Mammary epithelial cell (primary cell): ENCODE measurements at regions of chr2 and their contacts with region 1.

Region 1: DNA sequence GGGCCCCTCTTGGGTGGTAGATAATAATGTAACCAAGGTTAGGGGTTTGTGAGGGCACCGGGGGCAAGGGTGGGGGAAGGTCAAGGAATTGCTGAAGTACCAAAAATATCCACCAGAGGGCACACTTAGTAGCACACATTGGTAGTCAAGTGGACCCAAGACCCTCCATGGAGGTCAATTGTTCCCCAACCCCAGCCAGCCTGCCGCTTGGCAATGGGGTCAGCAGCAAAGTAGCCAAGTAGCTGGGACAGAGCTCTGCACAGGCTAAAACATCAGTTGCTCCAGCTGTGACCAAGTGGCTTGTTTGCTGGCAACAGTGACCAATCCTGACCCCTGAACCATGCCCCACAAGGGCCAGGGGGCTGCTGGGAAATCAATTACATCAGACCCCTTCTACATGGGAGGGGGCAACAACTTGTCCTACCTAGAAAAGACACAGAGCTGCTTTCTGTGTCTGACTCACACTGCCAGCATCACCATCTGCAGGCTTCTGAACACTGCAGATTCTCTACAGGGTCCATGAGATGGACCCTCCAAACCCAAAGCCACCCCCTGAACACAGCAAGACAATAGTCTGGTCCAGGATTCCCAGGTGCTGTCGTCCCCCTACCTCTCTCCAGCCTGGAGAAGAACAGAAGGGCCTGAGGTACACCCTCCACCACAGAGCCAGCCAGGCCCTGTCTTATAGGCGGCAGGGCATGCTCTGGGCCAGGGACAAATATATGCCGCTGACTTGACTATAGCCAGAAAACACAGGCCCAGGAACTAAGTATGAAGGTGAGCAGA is 76.0 kb downstream of the EMX1 start:
- DNase-seq: no peak
- H3K4me3 ChIP-seq: no peak overlapping the region
- H3K27ac ChIP-seq: no peak overlapping the region
- H3K4me1 ChIP-seq: no peaks in the 10 kb centered on the region
- H3K27me3 ChIP-seq: no peaks in the 10 kb centered on the region
- CTCF ChIP-seq: peak; percentile 70 to 73

Region 2: GRCh38 chr2:73020657-73021370 is 27.5 kb after region 1 on chr2:
- CTCF ChIA-PET with region 1: no interaction called
- dilution Hi-C with region 1: loop called (anchors 5 kb)
- in situ Hi-C with region 1: no loop called
- intact Hi-C with region 1: no loop called
- DNase-seq: no peak
- H3K4me3 ChIP-seq: no peak overlapping the region
- H3K27ac ChIP-seq: no peak overlapping the region
- H3K4me1 ChIP-seq: peaks cover 6% of the 10 kb centered on the region
- H3K27me3 ChIP-seq: no peaks in the 10 kb centered on the region
- CTCF ChIP-seq: no peak

Region 3: DNA sequence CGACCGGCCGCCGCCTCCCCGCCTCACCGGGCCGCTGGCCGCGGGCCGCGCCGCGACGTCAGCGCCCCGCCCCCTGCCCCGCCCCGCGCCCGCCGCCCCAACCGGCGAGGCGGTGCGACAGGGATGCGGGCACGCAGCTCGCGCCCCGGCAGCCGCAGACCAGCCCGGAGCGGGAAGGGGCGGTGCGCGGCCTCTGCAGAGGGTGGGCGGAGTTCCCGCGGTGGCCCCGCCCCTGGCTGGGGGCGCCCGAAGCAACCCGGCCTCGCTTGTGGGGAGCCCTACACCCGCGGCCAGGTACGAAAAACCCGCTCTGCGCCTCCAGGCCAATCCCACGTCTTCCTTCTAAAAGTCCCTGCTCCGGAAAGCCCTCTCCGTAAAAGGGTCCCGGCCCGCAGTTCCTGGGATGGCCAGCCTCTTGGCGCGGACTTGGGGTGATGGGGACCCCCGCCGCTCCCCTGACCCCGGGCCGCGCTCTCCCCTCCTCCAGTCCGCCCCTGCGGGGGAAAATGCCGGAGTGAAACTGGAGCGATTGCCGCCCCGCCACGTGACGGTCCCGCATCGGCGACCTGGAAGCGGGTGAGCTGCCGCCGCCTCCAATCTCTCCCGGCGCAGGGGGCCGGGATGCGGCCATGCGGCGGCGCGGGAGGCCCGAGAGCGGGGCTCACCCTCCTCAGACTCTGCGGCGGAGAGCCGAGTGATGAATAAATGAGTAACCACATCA is 119.7 kb after region 1 on chr2 and contains the start of gene RAB11FIP5:
- CTCF ChIA-PET with region 1: no interaction called
- dilution Hi-C with region 1: no loop called
- in situ Hi-C with region 1: no loop called
- intact Hi-C with region 1: no loop called
- DNase-seq: peak; percentile 86
- H3K4me3 ChIP-seq: peak within 1 kb of the TSS; percentile 79 to 89 (median 86)
- H3K27ac ChIP-seq: peak within 1 kb of the TSS; percentile 92
- H3K4me1 ChIP-seq: peaks cover 16% of the 10 kb centered on the region
- H3K27me3 ChIP-seq: no peaks in the 10 kb centered on the region
- CTCF ChIP-seq: no peak
- total RNA-seq, gene RAB11FIP5: 36.0 to 39.7 TPM

Region 4: DNA sequence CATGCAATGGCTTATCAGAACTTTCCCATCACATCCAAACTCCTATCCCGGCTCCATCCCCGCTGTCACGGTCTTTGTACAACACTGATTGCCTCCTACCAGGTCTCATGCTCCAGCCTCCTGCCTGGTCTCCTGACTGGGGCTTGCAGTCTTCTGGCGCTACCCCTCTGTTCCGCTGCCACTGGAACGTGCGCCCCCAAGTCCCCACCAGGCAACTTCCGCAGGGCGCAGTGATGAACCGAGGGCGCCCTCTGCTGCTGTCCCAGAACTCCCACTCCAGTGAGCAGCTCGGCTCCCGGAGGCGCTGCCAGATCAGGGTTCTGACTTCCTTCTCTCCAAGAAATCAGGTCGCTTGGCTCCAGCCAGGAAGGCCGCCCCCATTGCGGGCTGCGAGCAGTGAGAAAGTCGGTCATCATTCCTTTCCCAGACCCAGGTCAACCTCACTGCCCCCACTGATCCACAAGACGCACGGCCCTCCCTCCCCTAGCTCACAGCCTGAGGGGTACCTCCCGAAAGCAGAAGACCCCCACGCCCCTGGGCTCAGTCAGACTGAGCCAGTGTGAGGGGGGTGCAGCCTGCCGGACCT is 163.3 kb after region 1 on chr2:
- CTCF ChIA-PET with region 1: no interaction called
- dilution Hi-C with region 1: no loop called
- in situ Hi-C with region 1: loop called (anchors 5 to 25 kb)
- intact Hi-C with region 1: loop called (anchors 1 kb)
- DNase-seq: peak; percentile 24
- H3K4me3 ChIP-seq: peak overlapping the region in 1 of 3 experiments; percentile 36
- H3K27ac ChIP-seq: no peak overlapping the region
- H3K4me1 ChIP-seq: no peaks in the 10 kb centered on the region
- H3K27me3 ChIP-seq: no peaks in the 10 kb centered on the region
- CTCF ChIP-seq: peak; percentile 76 to 86

Region 5: DNA sequence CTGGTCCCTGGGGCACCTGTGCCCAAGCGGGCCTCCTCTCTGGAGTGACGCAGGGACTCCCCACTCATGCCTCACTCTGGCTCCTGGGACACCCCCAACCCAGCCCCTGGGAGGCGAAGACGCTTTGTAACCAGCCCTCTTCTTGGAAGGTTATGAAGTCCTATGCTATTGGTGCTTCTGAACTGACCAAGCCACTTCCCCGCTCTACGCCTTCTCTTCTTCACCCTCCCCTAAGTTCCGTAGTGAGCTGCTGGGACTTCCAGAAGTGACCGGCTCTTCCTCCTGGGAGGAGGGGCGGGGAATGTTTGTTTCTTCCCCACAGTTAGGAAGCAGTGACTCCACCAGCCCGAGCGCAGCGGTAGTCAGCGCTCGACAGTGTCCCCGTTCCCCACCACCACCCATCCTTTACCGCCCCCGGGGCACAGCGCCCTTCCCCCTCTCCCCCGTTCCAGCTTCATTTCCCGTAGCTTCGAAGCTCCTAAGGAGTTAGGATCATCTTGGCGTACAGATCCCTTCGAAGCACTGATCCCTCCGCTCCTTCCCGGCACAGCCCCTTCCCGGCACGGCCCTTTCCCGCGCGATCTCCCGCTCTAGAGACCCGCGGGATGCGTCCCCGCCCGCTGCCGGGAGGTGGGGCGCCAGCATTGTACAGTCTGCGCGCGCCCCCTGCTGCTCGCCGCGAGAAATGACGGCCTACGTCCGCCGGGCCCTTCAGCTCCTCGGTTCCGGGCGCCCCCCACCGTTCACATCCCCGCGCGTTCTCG is 183.7 kb after region 1 on chr2:
- CTCF ChIA-PET with region 1: interaction called, 3 read pairs
- dilution Hi-C with region 1: no loop called
- in situ Hi-C with region 1: loop called in 1 of 2 experiments (anchors 25 kb)
- intact Hi-C with region 1: loop called (anchors 1 kb)
- DNase-seq: peak; percentile 64
- H3K4me3 ChIP-seq: peak overlapping the region; percentile 55 to 59 (median 55)
- H3K27ac ChIP-seq: no peak overlapping the region
- H3K4me1 ChIP-seq: peaks cover 27% of the 10 kb centered on the region
- H3K27me3 ChIP-seq: peaks cover 13% of the 10 kb centered on the region
- CTCF ChIP-seq: peak; percentile 64 to 93

Region 6: DNA sequence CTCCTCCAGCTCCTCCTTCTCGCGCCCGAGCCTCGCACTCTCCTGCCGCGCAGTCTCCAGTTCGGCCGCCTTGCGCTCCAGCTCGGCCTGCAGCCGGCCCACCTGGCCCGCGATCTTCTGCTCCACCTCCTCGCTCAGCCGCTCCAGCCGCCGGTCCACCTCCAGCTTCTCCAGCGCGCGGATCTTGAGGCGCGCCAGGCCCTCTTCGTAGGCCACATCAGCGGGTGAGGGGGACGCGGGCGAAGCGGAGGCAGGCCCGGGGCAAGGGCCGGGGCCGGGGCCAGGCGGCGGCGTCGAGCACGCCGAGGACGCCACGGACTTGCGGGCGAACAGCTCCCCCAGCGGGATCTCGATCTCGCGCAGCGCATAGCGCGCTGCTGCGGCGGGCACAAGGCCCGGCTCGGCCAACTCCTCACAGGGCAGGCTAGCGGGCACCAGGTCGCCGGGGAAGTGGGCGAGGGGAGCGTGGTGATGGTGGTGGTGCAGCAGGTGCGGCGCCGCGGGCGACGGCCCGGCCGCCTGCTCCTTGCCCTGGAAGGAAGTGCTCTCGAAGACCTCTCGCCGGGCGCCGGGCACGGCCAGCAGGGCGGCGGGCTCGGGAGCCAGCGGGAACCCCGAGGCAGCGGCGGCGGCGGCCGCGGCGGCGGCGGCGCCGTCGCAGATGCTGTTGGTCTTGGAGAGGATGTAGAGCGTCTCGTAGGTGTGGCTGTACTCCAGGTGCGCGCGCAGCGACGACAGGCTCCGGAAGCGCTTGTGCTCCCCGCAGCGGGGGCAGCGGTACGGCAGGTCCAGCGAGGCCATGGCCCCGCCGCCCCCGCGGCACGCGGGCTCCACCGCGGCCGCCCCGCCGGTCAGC is 275.7 kb after region 1 on chr2:
- CTCF ChIA-PET with region 1: no interaction called
- dilution Hi-C with region 1: no loop called
- in situ Hi-C with region 1: no loop called
- intact Hi-C with region 1: loop called (anchors 10 kb)
- DNase-seq: peak; percentile 70
- H3K4me3 ChIP-seq: peak overlapping the region; percentile 14 to 50 (median 50)
- H3K27ac ChIP-seq: no peak overlapping the region
- H3K4me1 ChIP-seq: peaks cover 13% of the 10 kb centered on the region
- H3K27me3 ChIP-seq: no peaks in the 10 kb centered on the region
- CTCF ChIP-seq: peak in 1 of 2 donors; percentile 34